GM10248 (cell line): ENCODE measurements at regions of chr5 and their contacts with region 1.

Region 1: GRCh38 chr5:140372971-140373487 is 13.0 kb downstream of the SLC4A9 start:
- DNase-seq: peak; percentile 62
- CTCF ChIP-seq: peak; percentile 84

Region 2: GRCh38 chr5:140084541-140084940 is 288.5 kb before region 1 on chr5:
- CTCF ChIA-PET with region 1: no interaction called
- POLR2A ChIA-PET with region 1: no interaction called
- DNase-seq: no peak
- CTCF ChIP-seq: no peak

Region 3: GRCh38 chr5:140346348-140347101 is 26.5 kb before region 1 on chr5 and contains the start of gene HBEGF:
- CTCF ChIA-PET with region 1: interaction called, 205 read pairs
- POLR2A ChIA-PET with region 1: no interaction called
- DNase-seq: peak; percentile 81
- CTCF ChIP-seq: peak; percentile 47

Region 4: DNA sequence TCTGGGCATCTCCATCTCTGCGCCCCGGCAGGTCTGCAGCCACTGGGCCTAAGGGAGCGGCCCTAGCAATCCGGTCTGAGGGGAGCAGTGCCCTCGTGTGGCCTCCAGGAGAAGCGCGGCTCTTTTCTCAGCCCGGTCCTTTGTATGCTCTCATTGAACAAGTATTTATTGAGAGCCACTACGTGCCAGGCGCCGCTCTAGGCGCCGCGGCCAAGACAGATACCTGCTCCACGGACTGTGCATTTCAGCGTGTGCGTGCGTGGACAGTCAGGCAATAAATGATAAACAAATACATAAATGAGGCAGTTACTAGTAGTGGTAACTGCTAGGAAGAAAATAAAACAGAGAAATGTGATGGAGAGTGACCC is 15.3 kb before region 1 on chr5:
- CTCF ChIA-PET with region 1: interaction called, 205 read pairs
- POLR2A ChIA-PET with region 1: no interaction called
- DNase-seq: peak; percentile 90
- CTCF ChIP-seq: peak; percentile 92

Region 5: DNA sequence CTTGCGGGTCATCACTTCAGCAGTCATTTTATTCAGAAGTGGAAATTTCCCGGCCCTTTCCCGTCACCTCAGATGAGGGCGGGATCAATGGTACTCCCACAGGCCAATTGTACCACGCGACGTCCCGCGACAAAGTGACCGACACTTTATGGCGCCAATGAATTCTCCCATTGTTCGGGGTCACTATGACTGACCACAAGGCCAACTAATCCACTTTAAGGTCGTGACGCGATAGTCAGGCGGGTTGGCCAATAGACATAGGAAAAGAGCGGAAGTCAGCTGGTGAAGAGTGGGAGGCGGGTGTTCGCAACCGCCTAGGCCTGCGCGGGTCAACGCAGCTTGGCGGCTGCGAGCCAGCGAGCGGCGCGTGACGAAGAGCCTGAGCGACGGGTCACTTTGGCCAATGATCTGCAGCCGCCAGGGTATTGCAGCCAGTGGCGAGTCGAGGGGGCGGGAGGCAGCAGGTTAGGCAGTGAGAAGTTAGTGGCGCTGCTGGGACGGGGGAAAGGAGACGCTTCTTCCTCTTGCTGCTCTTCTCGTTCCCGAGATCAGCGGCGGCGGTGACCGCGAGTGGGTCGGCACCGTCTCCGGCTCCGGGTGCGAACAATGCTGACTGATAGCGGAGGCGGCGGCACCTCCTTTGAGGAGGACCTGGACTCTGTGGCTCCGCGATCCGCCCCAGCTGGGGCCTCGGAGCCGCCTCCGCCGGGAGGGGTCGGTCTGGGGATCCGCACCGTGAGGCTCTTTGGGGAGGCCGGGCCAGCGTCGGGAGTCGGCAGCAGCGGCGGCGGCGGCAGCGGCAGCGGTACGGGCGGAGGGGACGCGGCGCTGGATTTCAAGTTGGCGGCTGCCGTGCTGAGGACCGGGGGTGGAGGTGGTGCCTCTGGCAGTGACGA is 28.6 kb after region 1 on chr5 and contains the start of gene ANKHD1:
- CTCF ChIA-PET with region 1: interaction called, 21 read pairs
- POLR2A ChIA-PET with region 1: no interaction called
- DNase-seq: peak; percentile 93
- CTCF ChIP-seq: no peak

Region 6: GRCh38 chr5:140718241-140718580 is 345.2 kb after region 1 on chr5:
- CTCF ChIA-PET with region 1: interaction called, 48 read pairs
- POLR2A ChIA-PET with region 1: no interaction called
- DNase-seq: no peak
- CTCF ChIP-seq: no peak